CD8-positive, alpha-beta memory T cell (primary cell): ENCODE measurements at regions of chr5 and their contacts with region 1.

Region 1: GRCh38 chr5:69234457-69235268 is at the start of gene CDK7:
- DNase-seq: peak; percentile 87 to 94 (median 90)
- H3K4me3 ChIP-seq: peak within 1 kb of the TSS; percentile 89
- H3K4me3 Mint-ChIP-seq: peak within 1 kb of the TSS; percentile 96 to 99 (median 98)
- H3K27ac ChIP-seq: peak within 1 kb of the TSS; percentile 84
- H3K27ac Mint-ChIP-seq: peak within 1 kb of the TSS; percentile 87 to 98 (median 96)
- H3K4me1 ChIP-seq: peaks cover 17% of the 10 kb centered on the region
- H3K4me1 Mint-ChIP-seq: peaks cover 35 to 50% (median 50%) of the 10 kb centered on the region in 3 donors
- H3K27me3 ChIP-seq: no peaks in the 10 kb centered on the region
- H3K27me3 Mint-ChIP-seq: no peaks in the 10 kb centered on the region
- total RNA-seq, gene CDK7: 40.8 to 44.8 TPM

Region 2: DNA sequence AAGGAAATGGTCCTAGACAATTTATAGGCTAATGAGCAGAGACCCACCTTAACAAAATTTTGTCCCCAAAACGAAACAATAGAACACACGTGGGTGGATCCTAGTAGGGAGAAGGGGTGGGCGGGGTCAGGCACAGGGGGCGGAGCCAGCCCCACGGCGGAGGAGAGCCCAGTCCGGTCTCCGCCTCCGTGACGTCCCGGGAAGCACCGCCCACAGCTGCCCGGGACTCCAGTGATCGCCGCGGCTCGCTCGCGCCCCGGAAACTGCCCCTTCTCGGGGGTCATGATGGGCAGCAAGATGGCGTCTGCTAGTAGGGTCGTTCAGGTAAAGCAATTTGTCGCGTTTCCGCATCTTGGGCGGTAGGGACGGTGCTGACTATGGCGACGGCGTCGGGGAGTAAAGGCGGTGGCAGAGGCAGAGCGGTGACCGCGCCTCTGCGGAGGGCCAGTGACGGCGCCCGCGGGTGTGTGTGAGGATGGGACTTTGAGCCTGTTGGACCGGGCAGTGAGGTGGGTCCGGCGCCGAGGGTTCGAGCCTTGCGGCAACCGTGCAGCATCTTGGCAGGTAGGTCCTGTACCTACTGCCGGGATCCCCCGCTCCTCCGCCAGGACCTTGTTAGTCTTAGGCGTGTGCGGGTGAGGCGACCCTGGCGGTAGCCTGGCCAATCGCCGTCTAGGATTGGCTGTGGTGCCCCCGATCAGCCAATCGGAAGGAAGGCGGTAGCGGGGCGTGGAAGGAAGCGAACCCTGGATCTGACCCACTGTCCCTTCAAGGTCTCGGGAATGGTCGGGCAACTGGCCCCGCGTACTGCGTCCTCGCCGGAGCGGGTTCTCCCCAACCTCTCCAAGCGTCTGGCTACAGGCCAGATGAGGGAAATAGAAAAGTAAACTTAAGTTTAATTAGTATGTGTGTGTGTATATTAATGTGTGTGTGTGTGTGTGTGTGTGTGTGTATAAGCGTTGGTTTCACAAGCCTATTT is 16.8 kb before region 1 on chr5:
- CTCF ChIA-PET with region 1: interaction called, 8 read pairs
- POLR2A ChIA-PET with region 1: interaction called, 16 read pairs
- DNase-seq: peak; percentile 89 to 98 (median 96)
- H3K4me3 ChIP-seq: peak overlapping the region; percentile 98
- H3K4me3 Mint-ChIP-seq: peak overlapping the region; percentile 94 to 99 (median 99)
- H3K27ac ChIP-seq: peak overlapping the region; percentile 97
- H3K27ac Mint-ChIP-seq: peak overlapping the region; percentile 93 to 100 (median 98)
- H3K4me1 ChIP-seq: peaks cover 12% of the 10 kb centered on the region
- H3K4me1 Mint-ChIP-seq: peaks cover 22 to 45% (median 31%) of the 10 kb centered on the region in 3 donors
- H3K27me3 ChIP-seq: no peaks in the 10 kb centered on the region
- H3K27me3 Mint-ChIP-seq: no peaks in the 10 kb centered on the region

Region 3: DNA sequence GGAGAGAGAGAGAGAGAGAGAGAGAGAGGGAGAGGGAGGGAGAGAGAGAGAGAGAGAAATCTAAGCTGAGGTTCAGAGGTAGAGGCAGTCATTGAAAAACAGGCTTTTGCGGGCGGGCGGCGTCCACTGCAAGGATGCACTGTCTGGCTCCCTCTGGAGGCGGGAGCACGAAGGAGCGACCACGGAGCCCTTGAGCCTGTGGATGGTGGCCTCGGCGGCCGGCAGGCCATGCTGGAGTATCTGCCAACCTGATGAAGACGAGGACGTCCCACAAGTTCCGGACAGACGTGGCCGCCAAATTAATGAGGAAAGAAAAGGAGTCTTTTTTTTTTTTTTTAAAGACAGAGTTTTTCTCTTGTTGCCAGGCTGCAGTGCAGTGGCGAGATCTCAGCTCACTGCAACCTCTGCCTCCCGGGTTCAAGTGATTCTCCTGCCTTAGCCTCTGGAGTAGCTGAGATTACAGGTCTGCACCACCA is 100.2 kb after region 1 on chr5:
- CTCF ChIA-PET with region 1: interaction called, 10 read pairs
- POLR2A ChIA-PET with region 1: no interaction called
- DNase-seq: peak; percentile 58 to 82 (median 63)
- H3K4me3 ChIP-seq: no peak overlapping the region
- H3K4me3 Mint-ChIP-seq: peak overlapping the region in 6 of 7 donors; percentile 6 to 70 (median 58)
- H3K27ac ChIP-seq: no peak overlapping the region
- H3K27ac Mint-ChIP-seq: peak overlapping the region in 6 of 8 donors; percentile 34 to 84 (median 78)
- H3K4me1 ChIP-seq: peaks cover 18% of the 10 kb centered on the region
- H3K4me1 Mint-ChIP-seq: peaks cover 12 to 22% (median 20%) of the 10 kb centered on the region in 3 donors
- H3K27me3 ChIP-seq: no peaks in the 10 kb centered on the region
- H3K27me3 Mint-ChIP-seq: peaks cover 0 to 1% of the 10 kb centered on the region in 2 donors